ENCODE measurements at regions of chr5 and their contacts with region 1.

Region 1: GRCh38 chr5:157148734-157149615 is 6.3 kb upstream of the MED7 start:
- DNase-seq: peak; percentile 89
- H3K4me3 Mint-ChIP-seq: no peak overlapping the region
- H3K27ac Mint-ChIP-seq: peak overlapping the region; percentile 56
- H3K4me1 Mint-ChIP-seq: peaks cover 63% of the 10 kb centered on the region
- H3K27me3 Mint-ChIP-seq: no peaks in the 10 kb centered on the region

Region 2: GRCh38 chr5:156893517-156893916 is 255.5 kb before region 1 on chr5:
- CTCF ChIA-PET with region 1: no interaction called
- DNase-seq: no peak
- H3K4me3 Mint-ChIP-seq: no peak overlapping the region
- H3K27ac Mint-ChIP-seq: peak overlapping the region; percentile 92
- H3K4me1 Mint-ChIP-seq: peaks cover 52% of the 10 kb centered on the region
- H3K27me3 Mint-ChIP-seq: no peaks in the 10 kb centered on the region

Region 3: DNA sequence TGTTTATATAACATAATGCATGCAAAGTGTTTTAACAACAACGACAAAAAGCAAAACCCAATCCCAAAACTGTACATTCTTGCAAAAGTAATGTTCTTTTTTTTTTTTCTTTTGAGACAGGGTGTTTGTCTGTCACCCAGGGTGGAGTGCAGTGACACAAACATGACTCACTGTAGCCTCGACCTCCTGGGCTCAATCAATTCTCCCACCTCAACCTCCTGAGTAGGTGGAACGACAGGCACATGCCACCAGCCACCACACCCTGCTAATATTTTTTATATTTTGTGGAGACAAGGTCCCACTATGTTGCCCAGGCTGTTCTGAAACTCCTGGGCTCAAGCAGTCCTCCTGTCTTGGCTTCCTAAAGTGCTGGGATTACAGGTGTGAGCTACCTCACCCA is 76.5 kb before region 1 on chr5:
- CTCF ChIA-PET with region 1: no interaction called
- DNase-seq: peak; percentile 25
- H3K4me3 Mint-ChIP-seq: no peak overlapping the region
- H3K27ac Mint-ChIP-seq: peak overlapping the region; percentile 68
- H3K4me1 Mint-ChIP-seq: peaks cover 56% of the 10 kb centered on the region
- H3K27me3 Mint-ChIP-seq: peaks cover 4% of the 10 kb centered on the region

Region 4: GRCh38 chr5:157189223-157189622 is 40.2 kb after region 1 on chr5:
- CTCF ChIA-PET with region 1: interaction called, 37 read pairs
- DNase-seq: peak; percentile 46
- H3K4me3 Mint-ChIP-seq: peak overlapping the region; percentile 76
- H3K27ac Mint-ChIP-seq: peak overlapping the region; percentile 84
- H3K4me1 Mint-ChIP-seq: peaks cover 80% of the 10 kb centered on the region
- H3K27me3 Mint-ChIP-seq: no peaks in the 10 kb centered on the region

Region 5: DNA sequence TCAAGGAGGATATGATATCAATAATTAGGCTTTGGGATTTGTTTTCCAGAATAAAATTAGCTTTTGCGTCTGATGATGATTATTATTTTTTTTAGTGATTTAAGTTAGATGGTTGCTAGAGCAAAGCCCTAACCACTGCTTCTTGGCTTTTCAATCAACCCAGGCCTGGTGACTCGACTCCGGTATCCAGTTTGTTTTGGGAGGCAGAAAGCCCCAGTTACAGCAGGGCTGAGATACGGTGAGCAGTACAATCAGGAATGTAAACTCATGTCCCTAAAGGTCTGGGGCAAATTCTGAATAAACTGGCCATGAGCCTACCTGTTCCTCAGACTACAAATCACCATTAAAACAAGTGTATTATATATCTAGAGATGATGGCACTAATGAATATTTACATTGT is 92.5 kb after region 1 on chr5:
- CTCF ChIA-PET with region 1: interaction called, 14 read pairs
- DNase-seq: no peak
- H3K4me3 Mint-ChIP-seq: no peak overlapping the region
- H3K27ac Mint-ChIP-seq: peak overlapping the region; percentile 37
- H3K4me1 Mint-ChIP-seq: peaks cover 71% of the 10 kb centered on the region
- H3K27me3 Mint-ChIP-seq: no peaks in the 10 kb centered on the region

Region 6: DNA sequence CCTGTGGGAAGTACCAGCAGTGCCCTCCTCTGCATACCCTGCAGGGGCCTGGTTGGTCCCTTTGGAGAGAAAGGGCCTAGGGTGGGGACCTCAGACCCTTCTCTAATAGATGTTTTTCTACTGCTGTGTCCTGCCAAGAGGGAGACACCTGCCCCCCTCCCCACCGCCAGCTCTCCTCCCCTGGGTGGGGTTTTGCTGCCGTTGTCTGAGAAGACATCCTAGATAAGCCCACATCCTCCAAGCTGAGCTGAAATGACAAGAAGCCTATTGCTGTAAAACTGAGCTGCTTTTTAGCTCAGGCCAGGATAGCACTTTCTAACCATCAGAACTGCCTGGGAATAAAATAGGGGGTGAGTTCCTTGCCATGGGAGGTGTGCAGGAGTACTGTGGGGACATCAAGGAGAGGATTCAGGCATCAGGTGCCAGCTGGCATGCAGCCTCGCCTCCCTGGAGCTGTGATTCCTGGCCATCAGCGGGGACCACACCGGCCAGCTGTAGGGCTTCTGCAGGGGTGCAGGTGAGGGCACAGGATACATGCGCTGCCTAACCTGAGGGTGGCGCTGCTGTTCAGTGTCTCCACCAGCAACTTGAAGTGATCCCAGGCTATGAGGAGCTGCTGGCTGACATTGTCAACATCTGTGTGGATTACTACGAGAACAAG is 154.8 kb after region 1 on chr5:
- CTCF ChIA-PET with region 1: interaction called, 11 read pairs
- DNase-seq: peak; percentile 80
- H3K4me3 Mint-ChIP-seq: peak overlapping the region; percentile 75
- H3K27ac Mint-ChIP-seq: peak overlapping the region; percentile 99
- H3K4me1 Mint-ChIP-seq: peaks cover 76% of the 10 kb centered on the region
- H3K27me3 Mint-ChIP-seq: no peaks in the 10 kb centered on the region

Region 7: GRCh38 chr5:157431544-157432200 is 282.7 kb after region 1 on chr5:
- CTCF ChIA-PET with region 1: no interaction called
- DNase-seq: peak; percentile 38
- H3K4me3 Mint-ChIP-seq: no peak overlapping the region
- H3K27ac Mint-ChIP-seq: no peak overlapping the region
- H3K4me1 Mint-ChIP-seq: peaks cover 9% of the 10 kb centered on the region
- H3K27me3 Mint-ChIP-seq: peaks cover 40% of the 10 kb centered on the region

Measured in activated naive CD4-positive, alpha-beta T cell treated with anti-CD3 and anti-CD28 coated beads, Interleukin-2, amount 10 ng/mL, durations not matched to agents 7 days and 5 days (primary cell).